Activated CD4-positive, alpha-beta T cell treated with anti-CD3 and anti-CD28 coated beads for 36 hours (primary cell): ENCODE measurements at regions of chr12 and their contacts with region 1.

Region 1: GRCh38 chr12:49567611-49568441 is at the start of gene MCRS1:
- DNase-seq: peak; percentile 93
- ATAC-seq: peak; percentile 88
- H3K4me3 Mint-ChIP-seq: peak within 1 kb of the TSS; percentile 90
- H3K27ac Mint-ChIP-seq: peak within 1 kb of the TSS; percentile 95
- H3K4me1 Mint-ChIP-seq: peaks cover 37% of the 10 kb centered on the region
- H3K27me3 Mint-ChIP-seq: no peaks in the 10 kb centered on the region
- total RNA-seq, gene MCRS1: 48.2 to 58.2 TPM

Region 2: GRCh38 chr12:49366652-49367380 is 201.0 kb before region 1 on chr12:
- CTCF ChIA-PET with region 1: interaction called, 5 read pairs
- POLR2A ChIA-PET with region 1: no interaction called
- intact Hi-C with region 1: loop called (anchors 1 to 5 kb)
- DNase-seq: peak; percentile 94
- ATAC-seq: peak; percentile 86
- H3K4me3 Mint-ChIP-seq: peak overlapping the region; percentile 97
- H3K27ac Mint-ChIP-seq: peak overlapping the region; percentile 99
- H3K4me1 Mint-ChIP-seq: peaks cover 25% of the 10 kb centered on the region
- H3K27me3 Mint-ChIP-seq: no peaks in the 10 kb centered on the region

Region 3: GRCh38 chr12:49580572-49581535 is 13.0 kb after region 1 on chr12:
- CTCF ChIA-PET with region 1: interaction called, 16 read pairs
- POLR2A ChIA-PET with region 1: no interaction called
- intact Hi-C with region 1: no loop called
- DNase-seq: peak; percentile 77
- ATAC-seq: peak; percentile 84
- H3K4me3 Mint-ChIP-seq: no peak overlapping the region
- H3K27ac Mint-ChIP-seq: peak overlapping the region; percentile 68
- H3K4me1 Mint-ChIP-seq: peaks cover 21% of the 10 kb centered on the region
- H3K27me3 Mint-ChIP-seq: no peaks in the 10 kb centered on the region

Region 4: GRCh38 chr12:49673446-49674317 is 105.9 kb after region 1 on chr12:
- CTCF ChIA-PET with region 1: no interaction called
- POLR2A ChIA-PET with region 1: no interaction called
- intact Hi-C with region 1: no loop called
- DNase-seq: peak; percentile 28
- ATAC-seq: peak; percentile 34
- H3K4me3 Mint-ChIP-seq: no peak overlapping the region
- H3K27ac Mint-ChIP-seq: peak overlapping the region; percentile 93
- H3K4me1 Mint-ChIP-seq: peaks cover 82% of the 10 kb centered on the region
- H3K27me3 Mint-ChIP-seq: no peaks in the 10 kb centered on the region

Region 5: GRCh38 chr12:49828133-49829091 is 260.6 kb after region 1 on chr12 and contains the start of gene NCKAP5L:
- CTCF ChIA-PET with region 1: no interaction called
- POLR2A ChIA-PET with region 1: no interaction called
- intact Hi-C with region 1: loop called in 1 of 2 experiments (anchors 1 kb)
- DNase-seq: peak; percentile 97
- ATAC-seq: peak; percentile 99
- H3K4me3 Mint-ChIP-seq: peak within 1 kb of the TSS; percentile 86
- H3K27ac Mint-ChIP-seq: peak within 1 kb of the TSS; percentile 90
- H3K4me1 Mint-ChIP-seq: peaks cover 27% of the 10 kb centered on the region
- H3K27me3 Mint-ChIP-seq: no peaks in the 10 kb centered on the region
- total RNA-seq, gene NCKAP5L: 4.3 to 4.5 TPM

Region 6: DNA sequence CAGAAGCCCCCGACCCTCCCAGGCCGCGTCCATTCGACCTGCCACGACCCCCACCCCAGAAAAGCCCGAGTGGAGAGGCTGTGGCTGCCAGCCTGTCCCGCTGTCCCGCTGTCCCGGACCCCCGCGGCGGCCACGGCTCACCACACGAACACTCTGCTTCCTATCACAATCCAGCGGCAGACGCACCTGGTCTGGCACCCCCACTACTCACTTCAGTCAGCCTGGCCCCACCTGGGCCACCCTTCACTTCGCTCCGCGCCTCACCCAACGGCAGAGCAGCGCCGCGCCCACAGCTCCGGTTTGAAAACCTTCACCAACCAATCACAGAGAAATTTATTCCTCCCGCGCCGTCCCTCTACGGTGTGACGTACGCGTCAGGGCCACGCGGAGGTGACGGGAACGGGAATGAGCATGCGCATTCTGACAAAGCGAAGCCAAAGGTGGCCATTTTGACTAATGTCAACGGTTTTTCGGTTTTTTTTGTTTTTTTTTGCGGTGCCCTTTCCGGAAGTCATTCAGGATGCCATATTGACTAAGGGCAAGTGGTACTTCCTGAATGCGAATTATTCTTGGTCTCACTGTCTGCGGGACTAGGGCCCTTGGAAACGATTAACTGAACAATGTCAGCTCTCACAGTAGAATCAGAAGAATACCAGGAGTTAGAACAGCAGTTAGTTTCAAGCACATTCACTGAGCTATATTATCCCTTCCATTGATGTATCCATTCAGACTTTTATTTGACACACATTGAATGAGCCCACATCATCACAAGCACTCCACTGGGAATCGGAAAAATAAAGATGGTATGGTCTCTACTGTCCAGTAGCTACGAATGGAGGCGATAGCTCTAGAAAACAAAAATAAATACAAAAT is 457.6 kb after region 1 on chr12 and contains the start of gene RACGAP1:
- CTCF ChIA-PET with region 1: no interaction called
- POLR2A ChIA-PET with region 1: no interaction called
- intact Hi-C with region 1: loop called in 1 of 2 experiments (anchors 10 kb)
- DNase-seq: peak; percentile 97
- ATAC-seq: peak; percentile 98
- H3K4me3 Mint-ChIP-seq: peak within 1 kb of the TSS; percentile 90
- H3K27ac Mint-ChIP-seq: peak within 1 kb of the TSS; percentile 95
- H3K4me1 Mint-ChIP-seq: peaks cover 23% of the 10 kb centered on the region
- H3K27me3 Mint-ChIP-seq: no peaks in the 10 kb centered on the region
- total RNA-seq, gene RACGAP1: 99.7 to 118 TPM